Ascending aorta (tissue), 2 donors: ENCODE measurements at regions of chr12 and their contacts with region 1.

Region 1: DNA sequence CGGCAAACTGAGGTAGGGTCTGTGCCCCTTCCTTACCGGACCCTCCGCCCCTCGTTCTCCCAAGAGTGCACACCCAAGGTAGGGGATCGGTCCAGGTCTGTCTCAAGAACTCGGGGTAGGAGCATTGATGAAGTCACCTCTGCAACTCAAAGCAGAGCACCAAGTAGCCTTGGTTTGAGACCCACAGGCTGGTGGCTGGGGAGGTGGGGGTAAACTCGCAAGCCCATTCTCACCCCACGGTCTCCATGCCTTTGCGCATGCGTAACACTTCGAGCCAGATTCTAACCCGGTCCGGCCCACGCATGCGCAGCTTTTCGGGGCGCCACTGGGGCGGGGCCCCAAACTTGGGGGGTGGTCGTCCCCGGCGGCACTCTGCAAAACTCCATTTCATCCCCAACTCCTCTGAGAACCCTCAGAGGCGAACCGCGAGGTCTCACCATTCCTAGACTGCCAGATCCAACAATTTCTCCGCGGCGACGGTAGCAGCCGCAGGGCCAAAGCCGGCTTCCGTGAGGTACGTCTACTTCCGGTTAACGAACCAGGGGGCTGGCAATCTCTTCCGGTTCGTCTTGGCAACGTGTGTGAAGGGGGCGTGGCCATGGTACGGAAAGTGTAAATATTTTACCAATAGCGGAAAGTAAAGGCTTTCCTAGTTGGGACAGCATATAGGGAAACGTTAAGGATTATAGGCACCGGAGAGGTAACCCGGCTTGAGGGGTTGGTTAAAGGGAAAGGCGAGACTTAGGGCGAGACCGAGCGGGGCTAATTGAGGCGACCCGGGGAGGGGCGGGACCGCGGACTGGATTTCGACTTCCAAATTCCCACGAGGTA is at the start of gene MCRS1:
- DNase-seq: peak; percentile 36 to 93
- H3K4me3 ChIP-seq: peak within 1 kb of the TSS; percentile 76 to 87
- H3K27ac ChIP-seq: peak within 1 kb of the TSS; percentile 67 to 88
- H3K4me1 ChIP-seq: peaks cover 5 to 26% of the 10 kb centered on the region in 2 donors
- H3K27me3 ChIP-seq: no peaks in the 10 kb centered on the region
- CTCF ChIP-seq: no peak
- total RNA-seq, gene MCRS1: 66.8 TPM

Region 2: DNA sequence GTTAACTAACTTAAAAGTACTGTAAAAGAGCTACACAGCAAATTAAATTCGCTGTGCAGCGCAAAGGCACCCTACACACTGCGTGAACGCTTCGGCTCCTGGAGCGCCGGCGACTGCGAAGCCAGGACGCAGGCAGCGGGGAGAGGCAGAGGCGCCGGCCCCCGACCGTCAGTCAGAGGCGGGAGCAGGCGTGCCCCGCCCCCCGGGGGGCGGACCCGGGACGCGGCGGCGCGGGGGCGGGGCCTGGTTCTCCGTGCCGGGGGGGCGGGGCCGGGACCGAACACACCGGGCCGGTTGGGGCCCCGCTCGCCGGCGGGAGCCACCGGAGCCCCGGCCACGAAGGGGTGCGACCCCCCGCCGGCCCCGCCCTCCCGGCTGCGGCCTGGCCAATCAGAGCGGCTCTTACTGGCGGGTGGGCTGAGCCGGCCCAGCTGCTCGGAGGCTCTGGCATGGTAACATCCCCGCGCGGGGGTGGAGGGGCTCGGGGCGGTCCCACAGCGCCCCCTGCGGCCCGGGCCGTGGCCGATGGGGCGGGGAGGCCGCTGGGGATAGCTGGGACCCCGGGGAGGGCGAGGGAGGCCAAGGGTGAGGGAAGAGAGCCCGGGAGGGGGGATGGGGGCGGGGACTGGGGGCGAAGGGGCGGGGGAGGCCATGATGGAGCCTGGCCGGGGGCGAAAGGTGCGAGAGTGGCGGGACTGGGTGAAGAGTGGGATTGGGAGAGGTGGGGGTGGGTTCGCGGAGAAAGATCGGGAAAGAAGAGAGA is 55.5 kb after region 1 on chr12 and contains the start of gene PRPF40B:
- intact Hi-C with region 1: loop called (anchors 1 kb)
- DNase-seq: peak; percentile 49 to 93
- H3K4me3 ChIP-seq: peak within 1 kb of the TSS; percentile 49 to 77
- H3K27ac ChIP-seq: peak within 1 kb of the TSS; percentile 89 to 96
- H3K4me1 ChIP-seq: peaks cover 6 to 11% of the 10 kb centered on the region in 2 donors
- H3K27me3 ChIP-seq: no peaks in the 10 kb centered on the region
- CTCF ChIP-seq: peak; percentile 49 to 60 (median 58)
- total RNA-seq, gene PRPF40B: 9.5 TPM

Region 3: GRCh38 chr12:50025187-50026059 is 457.6 kb after region 1 on chr12 and contains the start of gene RACGAP1:
- intact Hi-C with region 1: loop called (anchors 1 kb)
- DNase-seq: peak; percentile 86 to 97
- H3K4me3 ChIP-seq: peak within 1 kb of the TSS; percentile 66 to 69
- H3K27ac ChIP-seq: peak within 1 kb of the TSS in 1 of 2 donors; percentile 13
- H3K4me1 ChIP-seq: no peaks in the 10 kb centered on the region
- H3K27me3 ChIP-seq: no peaks in the 10 kb centered on the region
- CTCF ChIP-seq: no peak
- total RNA-seq, gene RACGAP1: 5.1 TPM